SK-N-SH (cell line): ENCODE measurements at regions of chr20 and their contacts with region 1.

Region 1: GRCh38 chr20:59495894-59496510 is 108.3 kb upstream of the PHACTR3 start:
- DNase-seq: peak; percentile 84
- H3K4me3 ChIP-seq: no peak overlapping the region; a peak in 1 of 4 replicates
- H3K27ac ChIP-seq: no peak overlapping the region; a peak in 1 of 4 replicates
- H3K4me1 ChIP-seq: peaks cover 0 to 7% of the 10 kb centered on the region in 2 experiments; a peak in 1 of 4 replicates
- H3K27me3 ChIP-seq: no peaks in the 10 kb centered on the region
- CTCF ChIP-seq: peak; percentile 90
- EP300 ChIP-seq: no peak
- RAD21 ChIP-seq: peak; percentile 88

Region 2: GRCh38 chr20:58870239-58871014 is 625.6 kb before region 1 on chr20:
- CTCF ChIA-PET with region 1: interaction called, 19 read pairs
- POLR2A ChIA-PET with region 1: no interaction called
- DNase-seq: peak; percentile 80
- H3K4me3 ChIP-seq: peak overlapping the region in 1 of 2 experiments; percentile 19; a peak in 1 of 4 replicates
- H3K27ac ChIP-seq: no peak overlapping the region; a peak in 1 of 4 replicates
- H3K4me1 ChIP-seq: peaks cover 0 to 14% of the 10 kb centered on the region in 2 experiments; a peak in 1 of 4 replicates
- H3K27me3 ChIP-seq: no peaks in the 10 kb centered on the region
- CTCF ChIP-seq: peak; percentile 92
- EP300 ChIP-seq: no peak
- RAD21 ChIP-seq: peak; percentile 96

Region 3: DNA sequence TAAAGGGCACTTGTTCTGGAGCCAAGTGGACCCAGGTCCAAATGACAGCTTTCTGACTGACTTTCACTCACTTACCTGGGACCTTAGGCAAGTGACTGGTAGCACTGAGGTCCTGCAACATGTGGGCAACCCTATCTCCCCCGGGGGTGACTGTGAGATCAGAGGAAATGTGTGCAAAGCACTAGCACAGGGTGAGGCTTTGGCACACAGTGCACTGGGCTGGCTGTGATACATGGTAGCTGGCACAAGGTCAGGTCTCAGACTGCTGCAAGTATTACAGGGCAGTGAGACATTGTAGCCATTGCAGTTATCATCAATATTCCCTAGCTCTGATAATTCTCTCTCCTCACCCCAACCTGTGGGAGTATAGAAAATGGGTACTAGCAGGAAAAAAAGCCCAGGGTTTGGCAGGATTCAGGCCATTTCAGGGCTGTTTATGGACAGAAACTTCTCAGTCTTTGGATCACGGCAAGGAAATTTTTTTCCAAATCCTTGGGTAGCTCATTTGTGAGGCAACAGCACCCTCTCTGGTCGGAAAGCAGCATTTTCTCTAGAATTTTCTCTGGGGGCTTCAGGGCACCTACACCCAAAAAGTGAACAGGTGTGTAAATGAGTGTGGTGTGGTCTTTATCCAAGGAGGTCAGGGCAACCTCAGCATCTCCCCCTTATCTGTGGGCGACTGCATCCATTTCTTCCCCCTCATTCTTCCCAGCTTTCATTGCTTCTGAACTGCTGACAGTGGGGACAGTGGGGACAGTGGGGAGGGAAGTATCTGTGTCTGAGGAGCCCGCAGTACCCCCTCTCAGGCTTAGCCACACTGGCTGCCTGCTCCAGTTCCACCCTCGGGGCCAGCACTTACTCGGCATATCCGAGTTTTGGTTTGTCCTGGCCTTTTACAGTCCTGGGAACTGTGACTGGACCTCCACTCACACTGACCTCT is 40.3 kb before region 1 on chr20:
- CTCF ChIA-PET with region 1: interaction called, 34 read pairs
- POLR2A ChIA-PET with region 1: no interaction called
- DNase-seq: peak; percentile 77
- H3K4me3 ChIP-seq: peak overlapping the region in 1 of 2 experiments; percentile 48; a peak in 1 of 4 replicates
- H3K27ac ChIP-seq: peak overlapping the region in 1 of 2 experiments; percentile 74; a peak in 2 of 4 replicates
- H3K4me1 ChIP-seq: peaks cover 0 to 24% of the 10 kb centered on the region in 2 experiments; a peak in 1 of 4 replicates
- H3K27me3 ChIP-seq: no peaks in the 10 kb centered on the region
- CTCF ChIP-seq: peak; percentile 81
- EP300 ChIP-seq: no peak
- RAD21 ChIP-seq: peak; percentile 89

Region 4: DNA sequence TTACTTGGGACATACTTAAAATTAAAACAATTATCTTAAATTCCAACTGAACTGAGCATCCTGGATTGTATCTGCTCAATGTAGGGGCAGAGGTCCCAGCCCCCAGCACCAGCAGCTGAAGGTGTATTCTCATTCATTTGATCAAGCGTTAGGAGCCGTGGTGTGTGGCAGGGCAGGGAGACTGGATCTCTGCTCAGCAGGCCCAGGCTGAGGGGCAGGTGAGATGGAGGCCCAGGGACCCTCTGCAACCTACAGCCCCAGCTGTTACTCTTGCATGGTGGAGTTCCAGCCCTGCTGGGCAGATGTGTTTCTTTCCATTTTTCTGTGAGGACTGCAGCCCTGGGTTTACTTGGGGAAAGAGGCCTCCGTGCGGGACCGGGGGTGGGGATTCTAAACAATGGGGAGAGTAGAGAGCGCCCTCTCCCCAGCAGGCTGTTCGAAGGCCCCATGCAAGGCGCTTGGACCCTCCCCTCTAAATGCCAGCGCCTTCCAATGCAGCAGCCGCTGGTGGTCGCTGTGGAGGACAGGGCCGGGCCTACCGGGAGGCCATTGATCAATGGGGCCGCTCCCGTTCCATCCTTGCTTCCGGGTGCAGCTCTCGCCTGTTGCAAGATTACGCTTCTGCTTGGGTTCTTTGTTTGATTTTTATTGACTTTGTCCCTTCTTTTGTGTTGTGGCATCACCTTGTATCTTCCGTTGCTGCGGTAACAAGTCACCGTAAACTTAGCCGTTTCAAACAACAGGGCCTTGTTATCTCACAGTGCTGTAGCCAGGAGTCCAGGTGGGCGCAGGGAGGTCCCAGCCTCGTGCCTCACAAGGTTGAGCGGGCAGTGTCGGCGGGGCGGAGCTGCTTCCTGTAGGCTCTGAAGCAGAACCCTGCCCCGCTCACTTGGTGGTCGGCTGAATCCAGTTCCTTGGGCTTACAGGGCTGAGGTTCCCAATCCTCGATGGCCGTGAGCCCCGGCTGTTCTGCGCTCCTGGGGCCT is 26.4 kb before region 1 on chr20:
- CTCF ChIA-PET with region 1: interaction called, 19 read pairs
- POLR2A ChIA-PET with region 1: no interaction called
- DNase-seq: no peak
- H3K4me3 ChIP-seq: no peak overlapping the region
- H3K27ac ChIP-seq: no peak overlapping the region
- H3K4me1 ChIP-seq: peaks cover 0 to 13% of the 10 kb centered on the region in 2 experiments; a peak in 1 of 4 replicates
- H3K27me3 ChIP-seq: peaks cover 5% of the 10 kb centered on the region; the same call in 1 of the 2 replicates
- CTCF ChIP-seq: no peak
- EP300 ChIP-seq: no peak
- RAD21 ChIP-seq: no peak

Region 5: DNA sequence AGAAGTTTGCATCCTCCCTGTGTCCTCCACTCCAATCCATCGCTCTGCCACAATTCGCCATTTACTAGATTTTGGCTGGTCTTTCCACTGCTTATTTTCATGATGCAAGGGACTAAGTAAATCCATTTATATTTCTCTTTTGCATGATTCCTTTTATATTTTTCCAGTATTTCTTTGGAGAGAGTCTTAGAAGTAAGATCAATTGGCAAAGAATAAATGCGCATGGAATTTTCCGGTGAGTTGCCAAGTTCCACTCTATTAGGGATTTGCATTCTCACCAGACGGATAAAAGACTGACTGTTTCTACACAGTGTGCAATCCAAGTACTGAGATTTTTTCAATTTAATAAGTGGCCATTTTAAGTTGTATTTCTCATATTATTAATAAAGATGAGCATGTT is 16.6 kb after region 1 on chr20:
- CTCF ChIA-PET with region 1: interaction called, 39 read pairs
- POLR2A ChIA-PET with region 1: no interaction called
- DNase-seq: no peak
- H3K4me3 ChIP-seq: no peak overlapping the region
- H3K27ac ChIP-seq: no peak overlapping the region
- H3K4me1 ChIP-seq: peaks cover 0 to 4% of the 10 kb centered on the region in 2 experiments; a peak in 1 of 4 replicates
- H3K27me3 ChIP-seq: no peaks in the 10 kb centered on the region
- CTCF ChIP-seq: no peak
- EP300 ChIP-seq: no peak
- RAD21 ChIP-seq: no peak

Region 6: GRCh38 chr20:59525500-59526241 is 29.7 kb after region 1 on chr20:
- CTCF ChIA-PET with region 1: interaction called, 25 read pairs
- POLR2A ChIA-PET with region 1: no interaction called
- DNase-seq: peak; percentile 83
- H3K4me3 ChIP-seq: peak overlapping the region in 1 of 2 experiments; percentile 14; a peak in 2 of 4 replicates
- H3K27ac ChIP-seq: no peak overlapping the region
- H3K4me1 ChIP-seq: peaks cover 0 to 9% of the 10 kb centered on the region in 2 experiments; a peak in 1 of 4 replicates
- H3K27me3 ChIP-seq: no peaks in the 10 kb centered on the region
- CTCF ChIP-seq: peak; percentile 82
- EP300 ChIP-seq: no peak
- RAD21 ChIP-seq: peak; percentile 79